PC-3 (cell line): ENCODE measurements at regions of chr10 and their contacts with region 1.

Region 1: DNA sequence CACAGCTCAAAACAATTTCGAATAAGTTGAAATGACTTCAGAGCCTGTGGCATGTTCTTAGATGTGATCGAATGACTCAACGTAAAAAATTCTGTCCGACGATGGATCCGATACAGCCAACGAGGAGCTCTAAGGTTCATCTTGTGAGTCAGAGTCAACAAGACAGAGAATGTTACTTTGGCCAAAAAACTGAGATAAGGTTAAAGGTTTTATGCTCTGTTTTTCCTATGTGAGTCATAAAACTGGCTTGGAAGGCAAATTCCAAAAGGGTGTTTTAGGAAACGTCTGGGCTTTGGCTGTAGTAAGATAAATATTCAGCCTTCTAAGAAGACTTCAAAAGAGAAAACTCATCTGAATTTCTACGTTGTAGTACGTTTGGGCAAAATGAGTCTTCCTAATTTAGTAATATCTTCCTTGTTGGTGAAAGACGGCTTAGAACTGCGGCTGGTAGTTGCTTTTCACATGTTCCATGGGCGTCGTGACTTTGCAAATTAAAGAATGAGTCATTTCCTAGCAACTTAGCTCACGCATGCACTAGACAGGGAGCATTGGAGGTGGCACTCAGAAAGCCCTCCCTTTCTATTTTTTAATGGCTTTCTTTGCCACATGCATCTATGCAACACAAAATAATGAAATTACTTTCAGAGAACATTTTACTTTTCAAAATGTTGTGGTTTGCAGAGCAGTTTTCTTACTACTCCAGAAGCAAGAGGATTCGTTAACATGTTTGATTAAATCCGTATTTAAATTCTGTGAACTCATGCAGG is 28.2 kb downstream of the PFKP start:
- DNase-seq: peak; percentile 91
- ATAC-seq: peak; percentile 75
- H3K4me3 ChIP-seq: peak overlapping the region; percentile 50
- H3K27ac ChIP-seq: peak overlapping the region; percentile 98
- H3K4me1 ChIP-seq: peaks cover 46% of the 10 kb centered on the region
- H3K27me3 ChIP-seq: no peaks in the 10 kb centered on the region
- CTCF ChIP-seq: no peak

Region 2: DNA sequence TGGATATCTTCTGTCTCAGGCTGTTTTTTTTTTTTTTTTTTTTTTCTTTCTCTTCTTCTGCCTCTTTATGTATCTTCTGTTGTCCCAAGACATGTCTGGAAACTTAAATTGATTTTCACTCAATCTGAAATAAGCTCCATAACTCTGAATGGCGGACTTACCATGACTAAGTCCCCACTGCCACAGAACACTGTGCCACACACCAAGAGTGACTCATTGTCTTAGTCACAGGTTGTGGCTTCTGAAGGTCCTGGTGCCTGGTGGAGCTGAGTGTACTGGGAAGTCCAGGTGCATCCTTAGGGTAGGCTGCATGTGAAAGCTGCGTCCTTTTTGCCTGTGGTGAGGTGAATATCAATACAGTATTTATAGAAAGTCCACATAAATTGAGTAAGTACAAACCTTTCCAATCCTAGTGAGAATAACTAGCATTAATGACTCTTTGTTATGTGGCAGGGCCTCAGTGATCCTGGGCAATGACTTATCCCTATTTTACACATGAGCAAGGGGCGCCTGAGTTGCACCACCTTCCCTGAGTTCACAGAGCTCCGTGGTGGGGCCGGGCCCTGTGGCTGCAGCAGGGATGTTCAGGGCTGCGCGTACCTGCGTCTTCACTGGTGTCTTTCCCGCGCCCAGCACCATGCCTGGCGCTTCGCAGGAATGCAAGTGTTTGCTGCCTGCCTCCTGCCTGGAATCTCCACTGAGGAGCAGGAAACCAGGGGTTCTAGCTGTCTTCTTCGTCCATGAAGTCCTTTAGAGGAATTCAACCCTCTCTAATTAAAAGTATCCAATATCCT is 24.0 kb before region 1 on chr10:
- CTCF ChIA-PET with region 1: no interaction called
- POLR2A ChIA-PET with region 1: no interaction called
- intact Hi-C with region 1: loop called (anchors 2 kb)
- DNase-seq: peak; percentile 83
- ATAC-seq: peak; percentile 72
- H3K4me3 ChIP-seq: no peak overlapping the region
- H3K27ac ChIP-seq: peak overlapping the region; percentile 58
- H3K4me1 ChIP-seq: peaks cover 28% of the 10 kb centered on the region
- H3K27me3 ChIP-seq: no peaks in the 10 kb centered on the region
- CTCF ChIP-seq: no peak

Region 3: GRCh38 chr10:3077975-3078921 is 17.3 kb before region 1 on chr10:
- CTCF ChIA-PET with region 1: interaction called, 5 read pairs
- POLR2A ChIA-PET with region 1: no interaction called
- intact Hi-C with region 1: loop called (anchors 1 kb)
- DNase-seq: no peak
- ATAC-seq: no peak
- H3K4me3 ChIP-seq: no peak overlapping the region
- H3K27ac ChIP-seq: peak overlapping the region; percentile 62
- H3K4me1 ChIP-seq: peaks cover 36% of the 10 kb centered on the region
- H3K27me3 ChIP-seq: no peaks in the 10 kb centered on the region
- CTCF ChIP-seq: no peak

Region 4: GRCh38 chr10:3701491-3701890 is 605.9 kb after region 1 on chr10:
- CTCF ChIA-PET with region 1: no interaction called
- POLR2A ChIA-PET with region 1: no interaction called
- intact Hi-C with region 1: no loop called
- DNase-seq: no peak
- ATAC-seq: no peak
- H3K4me3 ChIP-seq: no peak overlapping the region
- H3K27ac ChIP-seq: no peak overlapping the region
- H3K4me1 ChIP-seq: no peaks in the 10 kb centered on the region
- H3K27me3 ChIP-seq: no peaks in the 10 kb centered on the region
- CTCF ChIP-seq: no peak